ENCODE measurements at regions of chr4 and their contacts with region 1.

Region 1: DNA sequence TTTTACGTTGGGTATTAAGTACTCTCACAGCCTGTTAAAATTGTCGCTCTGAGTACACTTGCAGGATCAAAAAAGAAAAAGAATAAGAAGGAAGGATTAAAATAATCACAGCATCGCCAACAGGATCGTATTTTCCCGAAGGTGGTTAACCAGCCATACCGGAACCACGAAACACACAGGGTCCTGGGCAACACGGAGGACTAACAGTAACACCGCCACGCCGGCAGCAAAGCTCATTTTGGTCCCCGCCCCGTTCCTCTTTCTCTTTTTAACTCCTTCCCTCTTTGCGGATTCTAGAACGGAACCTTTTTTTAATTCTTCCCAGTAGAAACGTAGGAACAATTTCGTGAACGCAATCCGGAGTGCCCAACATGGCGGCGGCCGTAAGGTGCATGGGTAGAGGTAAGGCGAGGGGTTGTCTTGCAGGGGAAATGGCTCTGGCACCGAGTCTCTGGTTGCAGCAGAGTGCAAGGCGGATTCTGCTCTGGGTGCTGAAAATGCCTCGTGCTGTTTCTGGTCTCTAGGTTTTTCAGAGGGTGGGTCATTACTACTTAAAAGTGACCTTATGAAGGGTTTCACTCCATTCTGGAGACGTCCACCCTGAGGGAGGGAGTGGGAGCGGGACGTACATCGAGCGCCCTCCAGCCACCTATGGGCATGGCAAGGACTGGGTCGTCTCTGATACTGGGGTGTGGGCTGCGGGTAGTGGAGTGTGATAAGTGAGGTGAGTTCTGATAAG is at the start of gene MRPL1:
- DNase-seq: peak; percentile 96
- H3K4me3 Mint-ChIP-seq: peak within 1 kb of the TSS; percentile 98
- H3K27ac Mint-ChIP-seq: peak within 1 kb of the TSS; percentile 100
- H3K4me1 Mint-ChIP-seq: peaks cover 47% of the 10 kb centered on the region
- H3K27me3 Mint-ChIP-seq: peaks cover 4% of the 10 kb centered on the region
- total RNA-seq, gene MRPL1: 65.0 and 72.7 TPM in 2 replicates

Region 2: GRCh38 chr4:76585897-76586360 is 1276.7 kb before region 1 on chr4:
- intact Hi-C with region 1: no loop called
- DNase-seq: peak; percentile 58
- H3K4me3 Mint-ChIP-seq: peak overlapping the region; percentile 28
- H3K27ac Mint-ChIP-seq: no peak overlapping the region
- H3K4me1 Mint-ChIP-seq: peaks cover 4% of the 10 kb centered on the region
- H3K27me3 Mint-ChIP-seq: peaks cover 62% of the 10 kb centered on the region

Region 3: GRCh38 chr4:77332696-77333270 is 529.9 kb before region 1 on chr4:
- intact Hi-C with region 1: no loop called
- DNase-seq: no peak
- H3K4me3 Mint-ChIP-seq: no peak overlapping the region
- H3K27ac Mint-ChIP-seq: no peak overlapping the region
- H3K4me1 Mint-ChIP-seq: no peaks in the 10 kb centered on the region
- H3K27me3 Mint-ChIP-seq: no peaks in the 10 kb centered on the region

Region 4: GRCh38 chr4:77734928-77735327 is 127.7 kb before region 1 on chr4:
- intact Hi-C with region 1: loop called (anchors 2 kb)
- DNase-seq: peak; percentile 85
- H3K4me3 Mint-ChIP-seq: peak overlapping the region; percentile 79
- H3K27ac Mint-ChIP-seq: peak overlapping the region; percentile 79
- H3K4me1 Mint-ChIP-seq: peaks cover 55% of the 10 kb centered on the region
- H3K27me3 Mint-ChIP-seq: no peaks in the 10 kb centered on the region

Region 5: DNA sequence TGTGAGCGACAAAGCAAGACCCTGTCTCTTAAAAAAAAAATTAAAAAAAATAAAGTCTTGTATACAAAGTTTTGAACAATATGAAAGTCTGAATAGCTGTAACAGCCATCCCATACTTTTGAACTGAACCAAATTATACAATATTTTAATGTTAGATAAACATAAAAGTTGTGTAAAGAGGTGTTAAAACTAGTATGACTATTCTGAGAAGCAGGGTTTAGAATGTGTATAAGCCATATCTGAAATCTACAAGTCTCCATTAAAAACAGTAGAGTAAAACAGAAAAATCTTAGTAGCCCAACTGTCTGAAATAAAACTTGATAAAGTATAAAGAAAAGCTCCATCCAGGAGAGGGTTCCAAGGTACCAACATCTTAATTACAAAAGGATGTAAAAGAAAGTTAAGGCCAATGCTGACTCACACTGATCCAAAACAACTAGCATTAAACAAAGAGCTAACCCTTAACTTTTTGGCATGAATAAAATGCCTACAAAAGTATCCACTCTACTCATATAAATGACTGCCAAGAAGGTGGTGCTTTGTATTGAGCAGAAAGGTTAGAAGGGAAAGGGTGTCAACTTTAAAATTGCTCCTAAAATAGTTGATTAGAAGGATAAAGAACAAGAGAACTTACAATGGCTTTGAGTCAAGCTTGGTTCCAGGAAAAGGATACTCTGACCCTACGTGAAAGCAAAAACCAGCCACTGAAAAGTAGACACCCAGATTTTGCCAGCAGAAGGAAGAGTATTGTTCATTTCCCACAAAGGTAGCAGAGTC is 62.0 kb before region 1 on chr4:
- intact Hi-C with region 1: loop called (anchors 5 kb)
- DNase-seq: peak; percentile 63
- H3K4me3 Mint-ChIP-seq: peak overlapping the region; percentile 73
- H3K27ac Mint-ChIP-seq: peak overlapping the region; percentile 84
- H3K4me1 Mint-ChIP-seq: peaks cover 40% of the 10 kb centered on the region
- H3K27me3 Mint-ChIP-seq: no peaks in the 10 kb centered on the region

Region 6: GRCh38 chr4:77843628-77844027 is 19.0 kb before region 1 on chr4:
- intact Hi-C with region 1: loop called (anchors 1 kb)
- DNase-seq: no peak
- H3K4me3 Mint-ChIP-seq: peak overlapping the region; percentile 1
- H3K27ac Mint-ChIP-seq: peak overlapping the region; percentile 86
- H3K4me1 Mint-ChIP-seq: peaks cover 29% of the 10 kb centered on the region
- H3K27me3 Mint-ChIP-seq: no peaks in the 10 kb centered on the region

Measured in activated CD4-positive, alpha-beta T cell treated with anti-CD3 and anti-CD28 coated beads, Interleukin-2, amount 10 ng/mL, durations not matched to agents 24 days and 14 days (primary cell).